ENCODE measurements at regions of chr12 and their contacts with region 1.

Region 1: GRCh38 chr12:44875954-44876553 is at the start of gene NELL2:
- DNase-seq: peak; percentile 43
- H3K4me3 Mint-ChIP-seq: peak within 1 kb of the TSS; percentile 96
- H3K27ac Mint-ChIP-seq: peak within 1 kb of the TSS; percentile 78
- H3K4me1 Mint-ChIP-seq: peaks cover 33% of the 10 kb centered on the region
- H3K27me3 Mint-ChIP-seq: peaks cover 23% of the 10 kb centered on the region
- total RNA-seq, gene NELL2: 11.5 and 16.4 TPM in 2 replicates

Region 2: DNA sequence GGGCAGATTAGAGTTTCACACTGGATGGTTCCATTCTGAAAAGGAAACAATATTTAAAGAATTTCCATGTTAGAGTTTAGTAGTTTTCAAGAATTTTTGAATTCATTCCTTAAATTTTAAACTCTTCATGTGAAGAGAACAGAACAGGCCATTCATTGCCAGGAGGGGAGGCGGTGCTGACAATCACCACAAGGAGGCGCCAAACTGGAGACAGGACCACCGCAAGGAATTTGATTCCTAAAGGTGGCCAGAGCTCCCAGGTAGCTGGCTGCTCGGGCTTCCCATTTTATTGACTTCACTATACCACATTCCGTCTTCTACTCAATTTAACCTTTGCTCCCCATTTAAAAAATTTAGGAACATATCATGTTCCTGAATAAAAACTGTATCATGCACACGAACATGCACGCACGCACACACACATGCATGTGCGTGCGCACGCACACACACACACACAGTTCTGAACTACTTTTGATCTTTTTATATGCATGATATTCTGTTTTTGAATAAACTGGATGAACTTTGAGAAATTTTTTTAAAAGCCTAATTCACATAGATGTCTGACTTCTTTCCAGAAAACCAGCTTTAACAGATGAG is 101.1 kb before region 1 on chr12:
- intact Hi-C with region 1: loop called (anchors 1 kb)
- DNase-seq: peak; percentile 18
- H3K4me3 Mint-ChIP-seq: no peak overlapping the region
- H3K27ac Mint-ChIP-seq: no peak overlapping the region
- H3K4me1 Mint-ChIP-seq: no peaks in the 10 kb centered on the region
- H3K27me3 Mint-ChIP-seq: no peaks in the 10 kb centered on the region

Region 3: GRCh38 chr12:44812062-44812461 is 64.0 kb before region 1 on chr12:
- intact Hi-C with region 1: loop called (anchors 1 kb)
- DNase-seq: peak; percentile 36
- H3K4me3 Mint-ChIP-seq: no peak overlapping the region
- H3K27ac Mint-ChIP-seq: no peak overlapping the region
- H3K4me1 Mint-ChIP-seq: peaks cover 20% of the 10 kb centered on the region
- H3K27me3 Mint-ChIP-seq: no peaks in the 10 kb centered on the region

Region 4: DNA sequence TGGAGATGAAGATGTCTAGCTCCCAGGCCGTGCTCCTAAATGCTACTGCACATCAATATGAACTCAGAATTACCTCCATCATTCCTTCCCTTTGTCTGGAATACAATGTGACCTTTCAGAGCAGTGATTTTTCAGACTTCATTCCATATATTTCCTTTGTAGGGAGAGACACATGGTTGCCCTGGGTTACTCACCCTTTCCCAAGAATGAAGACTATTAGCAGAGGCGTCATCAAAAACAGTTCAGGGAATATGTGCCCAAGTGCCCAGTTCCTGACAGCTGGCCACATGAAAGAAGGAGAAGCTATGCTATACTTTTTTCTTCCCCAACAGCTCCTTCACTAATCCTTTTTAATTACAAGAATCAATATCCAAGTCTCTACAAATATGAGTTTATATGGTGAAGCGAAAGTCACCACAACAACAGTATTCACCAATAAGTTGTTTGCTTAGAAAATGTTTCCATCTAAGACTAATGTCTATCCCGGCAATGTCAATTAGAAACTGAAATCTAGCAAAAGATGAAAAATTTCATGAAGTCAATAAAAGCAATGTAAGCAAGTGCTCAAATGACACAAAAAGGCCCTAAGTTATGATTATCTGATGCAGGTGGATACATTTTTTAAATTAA is 17.7 kb before region 1 on chr12:
- intact Hi-C with region 1: loop called (anchors 1 kb)
- DNase-seq: no peak
- H3K4me3 Mint-ChIP-seq: no peak overlapping the region
- H3K27ac Mint-ChIP-seq: peak overlapping the region; percentile 64
- H3K4me1 Mint-ChIP-seq: peaks cover 56% of the 10 kb centered on the region
- H3K27me3 Mint-ChIP-seq: no peaks in the 10 kb centered on the region

Region 5: DNA sequence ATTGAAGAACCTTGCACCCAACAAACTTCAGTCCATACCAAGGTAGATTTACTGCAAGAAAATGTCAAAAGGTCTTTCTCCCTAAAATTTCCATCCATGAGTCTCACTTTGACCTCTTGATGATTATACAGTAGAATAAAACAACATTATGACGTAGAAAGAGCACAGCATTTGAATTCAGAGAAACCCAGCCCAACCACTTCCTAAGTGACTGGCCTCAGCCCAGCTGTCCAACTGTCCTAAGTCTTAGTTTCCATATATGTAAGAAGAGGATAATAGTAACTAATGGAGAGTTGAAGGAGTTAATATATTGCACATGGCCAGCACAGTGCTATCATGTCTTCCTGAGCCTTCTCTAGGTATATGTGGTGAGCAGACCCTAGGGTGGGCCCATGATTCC is 41.1 kb after region 1 on chr12:
- intact Hi-C with region 1: no loop called
- DNase-seq: no peak
- H3K4me3 Mint-ChIP-seq: no peak overlapping the region
- H3K27ac Mint-ChIP-seq: no peak overlapping the region
- H3K4me1 Mint-ChIP-seq: no peaks in the 10 kb centered on the region
- H3K27me3 Mint-ChIP-seq: peaks cover 2% of the 10 kb centered on the region

Region 6: GRCh38 chr12:45309836-45310626 is 434.0 kb after region 1 on chr12:
- intact Hi-C with region 1: no loop called
- DNase-seq: no peak
- H3K4me3 Mint-ChIP-seq: no peak overlapping the region
- H3K27ac Mint-ChIP-seq: no peak overlapping the region
- H3K4me1 Mint-ChIP-seq: no peaks in the 10 kb centered on the region
- H3K27me3 Mint-ChIP-seq: no peaks in the 10 kb centered on the region